ENCODE measurements at regions of chr6 and their contacts with region 1.

Region 1: DNA sequence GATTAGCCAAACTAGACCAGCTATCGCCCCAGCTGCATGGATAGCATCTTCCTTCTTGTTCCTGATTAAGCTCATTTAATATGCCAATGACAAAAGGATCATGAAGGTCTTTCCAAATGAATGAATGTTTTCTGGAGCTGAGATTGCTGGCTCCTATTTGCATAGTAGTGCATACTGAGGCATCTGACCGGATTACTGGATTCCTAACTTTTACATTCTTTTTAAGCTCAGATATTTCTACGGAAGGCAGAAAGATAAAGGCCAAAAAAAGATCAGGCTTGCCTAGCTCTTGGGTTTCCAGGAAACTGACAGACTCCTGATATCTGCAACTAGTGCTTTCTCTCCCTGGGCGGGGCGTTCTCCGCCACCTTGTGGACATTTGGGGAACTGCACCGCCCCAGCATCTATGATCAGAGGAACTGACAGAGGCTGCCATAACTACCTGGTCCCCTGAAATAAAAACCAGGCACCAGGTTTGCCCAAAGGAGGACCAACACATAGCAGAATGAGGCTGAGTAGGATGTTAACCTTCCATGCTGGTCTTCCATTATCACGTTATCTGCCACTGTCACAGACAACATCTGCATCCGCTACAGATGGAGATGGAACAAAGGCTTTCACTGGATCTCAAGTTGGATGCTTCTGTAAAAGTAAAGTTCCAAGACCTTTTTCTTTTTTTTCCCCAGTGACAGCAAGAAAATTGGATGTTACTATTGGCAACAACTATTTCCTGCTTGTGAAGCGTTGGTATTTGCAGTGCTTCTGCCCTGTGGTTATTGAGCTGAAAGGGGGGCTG is 33.2 kb downstream of the NT5E start:
- DNase-seq: peak; percentile 78
- ATAC-seq: peak; percentile 90 to 92
- H3K4me3 ChIP-seq: no peak overlapping the region
- H3K27ac ChIP-seq: no peak overlapping the region
- H3K4me1 ChIP-seq: peaks cover 7% of the 10 kb centered on the region
- H3K27me3 ChIP-seq: no peaks in the 10 kb centered on the region
- CTCF ChIP-seq: peak; percentile 100

Region 2: DNA sequence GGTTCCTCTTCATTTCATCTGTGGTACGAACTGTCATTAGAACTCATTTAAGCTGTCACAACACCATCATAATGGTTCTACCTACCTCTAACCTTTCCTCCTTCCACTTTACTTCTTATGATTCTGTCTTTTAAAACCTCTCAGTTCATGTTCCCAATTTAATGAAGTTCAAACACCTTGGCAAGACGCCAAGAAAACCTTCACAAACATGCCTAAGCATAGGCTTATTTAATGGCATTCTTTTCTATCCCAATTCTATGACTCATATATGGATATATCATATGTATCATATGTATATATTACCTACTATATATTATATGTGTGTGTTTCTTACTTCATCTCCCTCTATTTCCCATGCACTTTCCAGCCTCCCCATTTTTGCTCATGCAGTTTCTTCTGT is 435.3 kb before region 1 on chr6:
- intact Hi-C with region 1: no loop called
- DNase-seq: no peak
- ATAC-seq: no peak
- H3K4me3 ChIP-seq: no peak overlapping the region
- H3K27ac ChIP-seq: no peak overlapping the region
- H3K4me1 ChIP-seq: no peaks in the 10 kb centered on the region
- H3K27me3 ChIP-seq: no peaks in the 10 kb centered on the region
- CTCF ChIP-seq: no peak

Region 3: GRCh38 chr6:85354761-85355618 is 128.1 kb before region 1 on chr6:
- intact Hi-C with region 1: loop called (anchors 10 kb)
- DNase-seq: peak; percentile 64
- ATAC-seq: peak; percentile 91 to 93
- H3K4me3 ChIP-seq: no peak overlapping the region
- H3K27ac ChIP-seq: no peak overlapping the region
- H3K4me1 ChIP-seq: no peaks in the 10 kb centered on the region
- H3K27me3 ChIP-seq: no peaks in the 10 kb centered on the region
- CTCF ChIP-seq: peak; percentile 95